Left cardiac atrium (tissue), 4 donors: ENCODE measurements at regions of chr4 and their contacts with region 1.

Region 1: GRCh38 chr4:158253350-158253980 is 43.2 kb downstream of the TMEM144 start:
- DNase-seq: peak; percentile 27
- ATAC-seq: peak; percentile 68 to 80

Region 2: GRCh38 chr4:157978680-157979361 is 274.6 kb before region 1 on chr4:
- intact Hi-C with region 1: loop called in 1 of 2 experiments (anchors 10 kb)
- DNase-seq: peak; percentile 39
- ATAC-seq: peak; percentile 78 to 81

Region 3: GRCh38 chr4:157992038-157992705 is 261.3 kb before region 1 on chr4:
- intact Hi-C with region 1: loop called (anchors 5 to 10 kb)
- DNase-seq: no peak
- ATAC-seq: peak; percentile 81 to 82

Region 4: DNA sequence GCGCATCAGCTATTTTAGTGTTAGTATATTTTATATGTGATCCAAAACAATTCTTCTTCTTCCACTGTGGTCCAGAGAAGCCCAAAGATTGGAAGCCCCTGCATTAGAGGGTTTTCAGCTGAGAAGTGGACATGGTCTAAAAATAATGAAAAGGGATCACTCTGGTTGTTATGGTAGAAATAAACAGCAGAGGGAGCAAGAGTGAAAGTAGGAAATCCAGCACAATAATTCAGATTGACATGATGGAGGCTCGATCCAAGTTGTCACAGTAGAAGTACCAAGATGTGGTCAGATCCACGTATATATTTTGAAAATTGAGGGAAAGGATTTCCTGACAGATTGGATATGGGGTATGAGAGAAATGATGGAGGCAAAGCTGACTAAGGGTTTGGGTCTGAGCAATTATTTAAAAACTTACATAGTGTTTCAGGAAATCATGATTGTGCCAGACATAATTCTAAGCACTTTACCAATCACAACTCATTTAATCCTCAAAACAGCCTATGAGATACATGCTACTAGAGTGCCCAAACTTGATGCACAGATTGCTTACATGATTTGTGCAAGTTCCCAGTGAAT is 60.2 kb before region 1 on chr4:
- intact Hi-C with region 1: loop called (anchors 5 to 10 kb)
- DNase-seq: no peak
- ATAC-seq: peak; percentile 61 to 67

Region 5: DNA sequence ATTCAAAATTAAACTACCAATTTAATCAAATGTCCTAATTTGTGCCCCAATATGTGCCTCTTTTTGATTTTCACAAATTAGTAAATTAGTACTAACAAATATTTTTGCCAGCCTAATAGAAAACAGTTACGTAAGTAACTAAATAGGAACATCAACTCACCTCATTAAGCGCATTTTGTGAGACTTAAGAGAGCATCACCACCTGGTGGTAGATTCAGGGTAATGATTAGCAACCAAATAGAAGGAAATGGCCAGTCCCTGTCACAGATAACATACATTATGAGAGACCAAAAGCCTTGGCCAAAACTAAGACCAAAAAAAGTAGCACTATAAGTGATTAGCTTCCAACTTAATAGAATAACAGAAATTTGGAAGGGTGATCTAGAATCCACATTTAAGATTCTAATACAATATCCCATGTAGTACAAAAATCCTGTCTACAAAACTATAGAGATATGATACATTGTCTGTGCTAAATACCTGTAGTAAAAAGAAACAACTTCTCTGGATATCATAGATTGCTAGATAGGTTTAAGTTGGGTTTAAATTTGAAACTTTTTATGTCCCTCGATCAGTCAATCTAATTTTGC is 371.5 kb after region 1 on chr4:
- intact Hi-C with region 1: loop called in 1 of 2 experiments (anchors 5 kb)
- DNase-seq: no peak
- ATAC-seq: peak; percentile 77 to 81